Calu3 (cell line): ENCODE measurements at regions of chr20 and their contacts with region 1.

Region 1: GRCh38 chr20:22339091-22339881 is 245.1 kb downstream of the FOXA2 start:
- DNase-seq: peak; percentile 31
- H3K4me3 Mint-ChIP-seq: no peak overlapping the region
- H3K27ac Mint-ChIP-seq: no peak overlapping the region
- H3K4me1 Mint-ChIP-seq: no peaks in the 10 kb centered on the region
- H3K27me3 Mint-ChIP-seq: no peaks in the 10 kb centered on the region
- CTCF ChIP-seq: no peak

Region 2: GRCh38 chr20:22389836-22390542 is 50.7 kb after region 1 on chr20:
- CTCF ChIA-PET with region 1: no interaction called
- intact Hi-C with region 1: no loop called
- DNase-seq: peak; percentile 55
- H3K4me3 Mint-ChIP-seq: no peak overlapping the region
- H3K27ac Mint-ChIP-seq: no peak overlapping the region
- H3K4me1 Mint-ChIP-seq: peaks cover 9% of the 10 kb centered on the region
- H3K27me3 Mint-ChIP-seq: no peaks in the 10 kb centered on the region
- CTCF ChIP-seq: no peak

Region 3: DNA sequence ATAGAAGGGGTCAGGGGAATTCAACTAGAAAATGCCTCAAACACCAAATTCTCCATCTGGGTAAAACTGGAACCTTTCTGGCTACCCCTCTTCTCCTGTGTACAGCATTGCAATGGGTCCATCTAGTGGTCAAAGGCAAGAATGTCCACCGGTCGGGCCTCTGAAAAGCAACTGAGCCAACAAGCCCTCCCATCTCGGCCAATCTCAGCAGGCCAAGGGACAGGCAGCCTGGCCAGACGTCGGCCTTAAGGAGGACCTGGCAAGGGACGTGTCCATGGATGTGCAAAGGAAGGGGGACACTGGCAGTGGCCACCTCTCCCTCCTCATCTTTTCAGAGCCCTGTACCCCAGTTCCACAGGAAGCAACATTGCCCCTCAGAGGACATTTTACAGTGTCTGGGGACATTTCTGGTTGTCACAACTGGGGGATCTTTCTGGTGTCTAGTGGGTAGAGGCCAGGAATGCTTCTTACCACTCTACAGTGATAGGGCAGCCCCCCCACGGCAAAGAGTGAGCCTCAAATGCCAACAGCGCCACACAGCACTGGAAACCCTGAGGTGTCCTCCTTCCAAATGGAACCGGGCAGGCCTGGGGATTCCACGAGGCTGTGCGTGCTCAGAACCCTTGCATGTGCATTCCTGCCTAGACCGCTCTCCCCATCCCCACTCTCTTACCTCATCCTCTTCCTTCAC is 344.9 kb after region 1 on chr20:
- CTCF ChIA-PET with region 1: interaction called, 3 read pairs
- intact Hi-C with region 1: loop called (anchors 2 kb)
- DNase-seq: peak; percentile 21
- H3K4me3 Mint-ChIP-seq: no peak overlapping the region
- H3K27ac Mint-ChIP-seq: no peak overlapping the region
- H3K4me1 Mint-ChIP-seq: no peaks in the 10 kb centered on the region
- H3K27me3 Mint-ChIP-seq: no peaks in the 10 kb centered on the region
- CTCF ChIP-seq: peak; percentile 35